ENCODE measurements at regions of chr5 and their contacts with region 1.

Region 1: DNA sequence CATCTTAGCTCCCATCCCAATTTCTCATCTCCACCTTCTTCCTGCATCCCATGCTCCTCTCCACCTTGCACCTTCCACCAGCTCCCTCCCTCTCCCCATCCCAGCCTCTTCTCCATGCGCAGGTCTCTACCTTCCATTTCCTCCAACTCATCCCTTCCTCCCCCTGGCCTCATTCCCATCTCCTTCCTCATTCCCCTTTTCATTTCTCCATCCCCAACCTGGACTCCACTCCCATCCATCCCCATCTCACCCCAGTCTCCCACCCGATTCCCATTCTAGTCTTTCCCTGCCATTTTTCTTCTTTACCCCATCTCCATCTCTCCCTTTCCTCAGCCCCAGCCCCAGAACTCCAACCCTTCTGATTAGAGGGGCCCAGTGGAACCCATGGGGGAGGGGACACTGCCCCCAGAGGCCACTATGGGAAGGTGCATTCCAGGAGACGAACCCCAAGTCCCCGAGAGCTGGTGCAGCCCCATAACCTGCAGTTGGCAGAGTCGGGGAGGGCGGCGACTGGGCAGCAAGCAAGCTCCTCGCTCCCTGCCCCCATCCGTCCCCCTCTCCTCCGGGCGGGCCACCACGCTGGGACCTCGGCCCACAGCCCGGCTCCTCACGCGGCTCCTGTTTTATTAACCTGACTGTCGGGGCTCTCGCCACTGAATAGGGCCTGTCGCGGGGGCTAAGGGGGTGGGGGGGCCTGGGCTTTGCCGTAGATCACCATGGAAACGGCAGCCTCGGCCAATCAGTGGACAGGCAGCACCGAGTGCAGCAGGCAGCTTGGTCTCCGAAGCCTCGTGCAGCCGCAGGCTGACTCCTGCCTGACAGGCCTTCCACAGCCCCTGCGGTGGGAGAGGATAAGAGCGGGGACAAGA is 66.7 kb downstream of the PCDH1 start:
- DNase-seq: peak; percentile 39
- H3K4me3 Mint-ChIP-seq: no peak overlapping the region
- H3K27ac Mint-ChIP-seq: no peak overlapping the region
- H3K4me1 Mint-ChIP-seq: peaks cover 6% of the 10 kb centered on the region
- H3K27me3 Mint-ChIP-seq: peaks cover 57% of the 10 kb centered on the region

Region 2: GRCh38 chr5:141825791-141826560 is 14.5 kb after region 1 on chr5:
- CTCF ChIA-PET with region 1: interaction called, 21 read pairs
- POLR2A ChIA-PET with region 1: no interaction called
- DNase-seq: peak; percentile 26
- H3K4me3 Mint-ChIP-seq: no peak overlapping the region
- H3K27ac Mint-ChIP-seq: no peak overlapping the region
- H3K4me1 Mint-ChIP-seq: peaks cover 10% of the 10 kb centered on the region
- H3K27me3 Mint-ChIP-seq: peaks cover 37% of the 10 kb centered on the region